Posterior vena cava (tissue), 2 donors: ENCODE measurements at regions of chr7 and their contacts with region 1.

Region 1: GRCh38 chr7:143240291-143241168 is 18.7 kb downstream of the TAS2R40 start:
- DNase-seq: no peak

Region 2: DNA sequence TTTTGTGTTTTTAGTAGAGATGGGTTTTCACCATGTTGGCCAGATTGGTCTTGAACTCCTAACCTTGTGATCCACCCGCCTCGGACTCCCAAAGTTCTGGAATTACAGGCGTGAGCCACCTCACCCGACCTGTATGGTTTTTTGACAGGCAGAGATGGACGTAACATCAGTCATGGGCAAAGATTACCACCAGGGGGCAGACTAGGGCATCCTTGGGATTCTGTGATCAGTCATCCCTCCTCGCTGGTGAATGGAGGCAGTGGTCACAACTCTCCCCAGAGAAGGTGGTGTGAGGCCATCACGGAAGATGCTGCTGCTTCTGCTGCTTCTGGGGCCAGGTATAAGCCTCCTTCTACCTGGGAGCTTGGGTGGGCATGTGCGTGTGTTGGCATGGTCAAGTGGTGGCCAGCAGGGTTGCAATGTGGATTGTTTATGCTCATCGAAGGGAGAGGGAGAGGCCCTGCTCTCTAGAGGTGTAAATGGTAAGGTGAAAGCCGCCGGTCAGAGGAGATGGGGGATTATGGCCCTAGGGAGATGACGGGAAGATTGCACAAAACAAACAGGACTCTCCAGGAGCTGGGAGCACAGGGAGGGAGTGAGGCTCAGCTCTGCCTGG is 614.0 kb before region 1 on chr7:
- intact Hi-C with region 1: no loop called
- DNase-seq: no peak

Region 3: DNA sequence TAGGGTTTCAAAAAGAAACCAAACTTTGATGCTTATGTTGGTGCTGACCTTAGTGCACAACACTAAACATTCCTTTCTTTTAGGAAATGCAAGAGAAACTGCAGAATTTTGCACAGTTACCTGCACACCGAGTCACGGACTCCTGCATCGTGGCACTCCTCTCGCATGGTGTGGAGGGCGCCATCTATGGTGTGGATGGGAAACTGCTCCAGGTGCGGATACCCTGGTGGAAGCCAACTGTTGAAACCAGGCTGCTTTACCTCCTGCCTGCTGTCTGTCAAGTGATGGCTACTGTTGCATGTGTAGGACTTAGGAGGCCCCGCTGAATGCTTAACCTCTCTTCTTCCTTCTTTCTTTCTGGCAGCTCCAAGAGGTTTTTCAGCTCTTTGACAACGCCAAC is 59.3 kb after region 1 on chr7:
- intact Hi-C with region 1: loop called in 1 of 2 experiments (anchors 10 kb)
- DNase-seq: no peak

Region 4: DNA sequence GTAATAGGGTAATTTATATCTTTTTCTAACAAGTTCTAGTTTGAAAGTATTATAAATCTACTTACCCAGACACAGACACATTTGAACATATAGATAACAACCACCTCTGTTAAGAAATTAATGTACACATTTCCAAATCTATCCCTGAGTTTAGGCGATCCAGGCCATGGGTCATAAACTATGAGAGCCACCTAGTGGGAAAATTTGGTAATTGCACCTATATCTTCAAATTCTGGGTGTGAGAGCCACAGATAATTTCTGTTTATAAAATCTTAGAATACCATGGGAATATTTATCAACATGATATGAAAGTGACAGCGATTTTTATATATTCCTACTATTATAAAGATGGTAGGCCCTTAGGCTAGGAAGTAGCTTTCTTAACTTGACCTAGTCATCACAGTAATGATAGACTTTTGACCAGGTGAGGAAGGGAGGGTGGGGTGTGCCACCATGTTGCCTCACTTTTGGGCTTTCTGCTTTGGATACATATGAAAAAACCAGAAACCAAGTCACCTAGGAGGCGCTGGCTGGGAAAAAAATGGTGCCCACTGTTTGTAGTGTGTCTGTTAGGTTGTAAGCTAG is 176.1 kb after region 1 on chr7:
- intact Hi-C with region 1: loop called (anchors 5 kb)
- DNase-seq: no peak